ENCODE measurements at regions of chr14 and their contacts with region 1.

Region 1: DNA sequence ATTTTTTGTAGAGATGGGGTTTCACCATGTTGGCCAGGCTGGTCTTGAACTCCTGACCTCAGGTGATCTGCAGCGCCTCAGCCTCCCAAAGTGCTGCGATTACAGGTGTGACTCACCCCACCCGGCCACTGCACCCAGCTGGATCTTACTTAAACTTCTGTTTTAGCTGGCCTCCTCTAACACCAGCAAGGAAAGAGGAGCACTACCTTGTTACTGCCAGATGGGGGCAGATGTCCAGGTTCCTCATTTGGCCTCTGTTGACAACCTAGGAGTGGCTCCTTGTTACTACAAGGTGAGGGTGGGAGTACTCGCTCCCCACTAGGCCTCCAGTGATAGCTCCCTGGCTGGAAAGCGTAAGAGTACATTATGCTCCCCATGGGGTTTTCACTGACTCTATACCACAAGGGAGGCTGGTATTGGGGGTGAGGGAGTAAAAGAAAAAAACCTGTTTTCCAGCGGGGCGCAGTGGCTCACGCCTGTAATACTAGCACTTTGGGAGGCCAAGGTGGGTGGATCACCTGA is 13.1 kb upstream of the ARF6 start:
- DNase-seq: peak; percentile 95
- ATAC-seq: peak; percentile 89
- H3K4me3 ChIP-seq: peak overlapping the region in 1 of 2 experiments; percentile 33; a peak in 2 of 4 replicates
- H3K27ac ChIP-seq: peak overlapping the region; percentile 63
- H3K4me1 ChIP-seq: peaks cover 27 to 63% of the 10 kb centered on the region in 2 experiments
- H3K27me3 ChIP-seq: no peaks in the 10 kb centered on the region
- CTCF ChIP-seq: peak; percentile 53 to 88 (median 79); a peak in 5 of 6 replicates
- POLR2A ChIP-seq: no peak
- RAD21 ChIP-seq: peak; percentile 79

Region 2: GRCh38 chr14:49367696-49368095 is 512.0 kb before region 1 on chr14:
- CTCF ChIA-PET with region 1: no interaction called
- POLR2A ChIA-PET with region 1: no interaction called
- RAD21 ChIA-PET with region 1: no interaction called
- intact Hi-C with region 1: no loop called
- DNase-seq: no peak
- ATAC-seq: no peak
- H3K4me3 ChIP-seq: no peak overlapping the region
- H3K27ac ChIP-seq: no peak overlapping the region
- H3K4me1 ChIP-seq: no peaks in the 10 kb centered on the region
- H3K27me3 ChIP-seq: peaks cover 5% of the 10 kb centered on the region
- CTCF ChIP-seq: no peak
- POLR2A ChIP-seq: no peak
- RAD21 ChIP-seq: no peak

Region 3: GRCh38 chr14:49862089-49862673 is 17.6 kb before region 1 on chr14:
- CTCF ChIA-PET with region 1: interaction called, 30 read pairs
- POLR2A ChIA-PET with region 1: interaction called, 20 read pairs
- RAD21 ChIA-PET with region 1: interaction called, 4 to 6 read pairs
- intact Hi-C with region 1: no loop called
- DNase-seq: peak; percentile 82
- ATAC-seq: peak; percentile 63
- H3K4me3 ChIP-seq: peak overlapping the region; percentile 77 to 80
- H3K27ac ChIP-seq: peak overlapping the region; percentile 74
- H3K4me1 ChIP-seq: peaks cover 9 to 41% of the 10 kb centered on the region in 2 experiments; a peak in 3 of 4 replicates
- H3K27me3 ChIP-seq: no peaks in the 10 kb centered on the region
- CTCF ChIP-seq: peak; percentile 100
- POLR2A ChIP-seq: no peak
- RAD21 ChIP-seq: peak; percentile 64

Region 4: GRCh38 chr14:49892636-49893308 is 13.0 kb after region 1 on chr14 and contains the start of gene ARF6:
- CTCF ChIA-PET with region 1: interaction called, 9 read pairs
- POLR2A ChIA-PET with region 1: interaction called, 12 read pairs
- RAD21 ChIA-PET with region 1: no interaction called
- intact Hi-C with region 1: loop called (anchors 1 kb)
- DNase-seq: peak; percentile 90
- ATAC-seq: peak; percentile 93
- H3K4me3 ChIP-seq: peak within 1 kb of the TSS; percentile 72 to 94
- H3K27ac ChIP-seq: peak within 1 kb of the TSS; percentile 99
- H3K4me1 ChIP-seq: peaks cover 27 to 52% of the 10 kb centered on the region in 2 experiments
- H3K27me3 ChIP-seq: no peaks in the 10 kb centered on the region
- CTCF ChIP-seq: no peak
- POLR2A ChIP-seq: peak; percentile 73
- RAD21 ChIP-seq: peak; percentile 43; the same call in 1 of the 2 replicates
- total RNA-seq, gene ARF6: 88.8 TPM

Region 5: DNA sequence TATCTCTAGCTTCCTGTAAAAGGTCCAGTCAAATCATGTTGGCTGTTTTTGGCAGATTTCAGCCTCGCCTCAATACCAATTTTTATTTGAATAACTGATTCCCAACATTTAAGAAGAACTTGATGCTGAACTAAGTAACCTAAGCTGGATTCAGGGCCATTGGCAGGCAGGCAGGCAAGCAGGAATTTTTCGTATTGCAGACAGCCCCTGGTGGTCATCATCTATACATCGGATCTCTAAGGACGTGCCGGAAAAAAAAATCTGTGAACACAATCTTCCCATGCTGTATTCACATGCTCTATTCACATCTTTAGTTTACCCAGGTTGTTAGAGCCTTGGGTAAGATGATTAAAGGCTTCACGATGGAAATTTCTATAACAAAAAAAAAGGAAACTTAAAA is 229.6 kb after region 1 on chr14:
- CTCF ChIA-PET with region 1: interaction called, 12 read pairs
- POLR2A ChIA-PET with region 1: no interaction called
- RAD21 ChIA-PET with region 1: no interaction called
- intact Hi-C with region 1: loop called (anchors 1 kb)
- DNase-seq: peak; percentile 4
- ATAC-seq: peak; percentile 46; the same call in 1 of the 2 replicates
- H3K4me3 ChIP-seq: no peak overlapping the region
- H3K27ac ChIP-seq: no peak overlapping the region
- H3K4me1 ChIP-seq: peaks cover 0 to 4% of the 10 kb centered on the region in 2 experiments; a peak in 1 of 4 replicates
- H3K27me3 ChIP-seq: no peaks in the 10 kb centered on the region
- CTCF ChIP-seq: peak in 2 of 3 experiments; percentile 43 to 50; a peak in 3 of 6 replicates
- POLR2A ChIP-seq: no peak
- RAD21 ChIP-seq: peak; percentile 25; the same call in 1 of the 2 replicates

Region 6: GRCh38 chr14:50148799-50149198 is 269.1 kb after region 1 on chr14:
- CTCF ChIA-PET with region 1: no interaction called
- POLR2A ChIA-PET with region 1: no interaction called
- RAD21 ChIA-PET with region 1: no interaction called
- intact Hi-C with region 1: no loop called
- DNase-seq: no peak
- ATAC-seq: no peak
- H3K4me3 ChIP-seq: no peak overlapping the region
- H3K27ac ChIP-seq: no peak overlapping the region
- H3K4me1 ChIP-seq: no peaks in the 10 kb centered on the region
- H3K27me3 ChIP-seq: no peaks in the 10 kb centered on the region
- CTCF ChIP-seq: no peak
- POLR2A ChIP-seq: no peak
- RAD21 ChIP-seq: no peak

Measured in HCT116 (cell line).